Sigmoid colon (tissue), 7 donors: ENCODE measurements at regions of chr12 and their contacts with region 1.

Region 1: DNA sequence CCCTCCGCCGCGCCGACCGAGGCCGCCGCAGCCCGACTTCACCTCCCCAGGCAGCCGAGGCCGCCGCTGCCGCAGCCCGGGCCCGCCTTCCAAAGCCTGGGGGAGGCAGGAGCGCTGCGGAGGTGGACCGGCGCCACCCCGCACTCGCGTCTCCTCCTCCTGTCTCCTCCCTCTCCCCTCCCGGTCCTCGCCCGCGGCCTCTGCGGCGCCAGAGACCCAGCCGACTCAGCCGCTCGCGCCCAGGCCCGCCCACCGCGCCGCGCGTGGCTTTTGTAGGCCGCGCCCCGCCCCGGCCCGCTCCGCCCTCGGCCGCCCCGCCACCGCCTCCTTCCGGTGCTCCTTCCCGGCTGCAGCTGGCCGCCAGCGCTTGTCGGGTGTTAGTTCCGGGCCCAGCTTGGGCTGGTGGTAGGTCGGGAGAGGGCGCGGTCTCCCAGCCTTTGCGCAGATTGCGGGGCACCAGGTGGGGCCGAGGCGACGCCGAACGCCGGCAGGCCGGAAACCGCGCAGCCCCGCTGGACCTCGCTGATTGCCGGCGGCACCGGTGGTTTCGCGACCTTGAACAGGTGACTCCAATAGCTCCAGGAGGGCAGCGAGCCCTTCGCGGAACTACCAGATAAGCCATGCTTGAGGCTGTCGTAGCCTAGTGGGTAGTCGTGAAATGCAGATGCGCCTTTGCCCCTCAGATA is at the start of gene CAPRIN2:
- DNase-seq: peak; percentile 97
- H3K4me3 ChIP-seq: peak within 1 kb of the TSS; percentile 62 to 95 (median 76)
- H3K27ac ChIP-seq: peak within 1 kb of the TSS; percentile 88
- H3K4me1 ChIP-seq: peaks cover 0 to 19% (median 15%) of the 10 kb centered on the region in 4 donors
- H3K27me3 ChIP-seq: no peaks in the 10 kb centered on the region
- CTCF ChIP-seq: peak in 1 of 4 experiments; percentile 25
- EP300 ChIP-seq: no peak
- POLR2A ChIP-seq: peak in 1 of 2 donors; percentile 53
- total RNA-seq, gene CAPRIN2: 25.0 to 42.9 (median 31.5) TPM

Region 2: DNA sequence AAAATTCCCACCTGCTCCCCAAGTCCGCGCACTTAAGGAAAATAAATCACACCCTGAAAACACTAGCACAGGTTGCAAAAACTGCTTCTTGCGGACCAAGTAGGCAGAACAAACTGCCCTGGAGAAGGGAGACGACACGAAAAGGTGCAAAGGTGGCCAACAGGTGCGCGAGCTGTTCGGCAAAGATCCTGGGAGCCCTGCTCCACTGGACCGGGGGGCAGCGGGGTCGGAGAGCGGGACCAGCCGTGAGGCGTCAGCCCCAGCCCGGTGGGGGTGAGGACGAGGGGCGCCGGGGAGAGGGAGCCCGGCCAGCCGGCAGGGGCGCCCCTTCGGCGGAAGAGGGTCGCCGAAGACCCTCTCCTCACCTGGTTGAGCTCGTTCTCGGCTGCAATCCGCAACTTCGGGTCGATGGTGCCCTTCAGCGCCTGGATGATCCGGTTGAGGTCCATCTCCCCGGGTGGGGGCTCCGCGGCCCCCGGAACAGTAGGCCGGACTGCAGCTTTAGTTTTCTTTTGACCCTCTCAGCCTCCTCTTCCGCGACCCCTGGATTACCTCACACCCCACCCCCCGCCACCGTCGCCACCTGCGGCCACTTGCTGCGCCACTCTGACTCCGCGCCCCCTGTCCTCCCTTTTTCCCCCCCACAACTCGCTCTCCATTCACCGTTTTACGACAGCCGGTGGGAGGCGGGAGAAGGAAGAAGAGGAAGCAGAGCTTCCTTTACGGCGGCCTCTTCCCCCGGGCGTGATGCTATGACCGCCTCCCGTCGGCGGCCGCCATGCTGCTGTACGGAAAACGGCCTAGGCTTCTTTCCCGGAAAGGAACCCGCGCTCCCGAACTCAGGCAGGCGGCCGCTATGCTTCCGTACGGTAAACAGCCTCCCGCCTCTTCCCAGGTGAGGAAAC is 59.4 kb before region 1 on chr12 and contains the start of gene IPO8:
- intact Hi-C with region 1: loop called (anchors 2 kb)
- DNase-seq: peak; percentile 95
- H3K4me3 ChIP-seq: peak within 1 kb of the TSS; percentile 94 to 99 (median 97)
- H3K27ac ChIP-seq: peak within 1 kb of the TSS; percentile 86 to 90 (median 88)
- H3K4me1 ChIP-seq: peaks cover 0 to 42% (median 40%) of the 10 kb centered on the region in 4 donors
- H3K27me3 ChIP-seq: no peaks in the 10 kb centered on the region
- CTCF ChIP-seq: peak in 2 of 4 experiments; percentile 15 to 48
- EP300 ChIP-seq: no peak
- POLR2A ChIP-seq: no peak
- total RNA-seq, gene IPO8: 32.8 to 61.2 (median 37.4) TPM

Region 3: GRCh38 chr12:30795410-30796312 is 40.8 kb after region 1 on chr12:
- intact Hi-C with region 1: loop called (anchors 5 kb)
- DNase-seq: peak; percentile 73
- H3K4me3 ChIP-seq: peak overlapping the region; percentile 42 to 60 (median 50)
- H3K27ac ChIP-seq: peak overlapping the region in 2 of 4 donors; percentile 2 to 38
- H3K4me1 ChIP-seq: peaks cover 0 to 19% (median 17%) of the 10 kb centered on the region in 4 donors
- H3K27me3 ChIP-seq: peaks cover 0 to 32% (median 5%) of the 10 kb centered on the region in 3 donors
- CTCF ChIP-seq: no peak
- EP300 ChIP-seq: no peak
- POLR2A ChIP-seq: no peak

Region 4: DNA sequence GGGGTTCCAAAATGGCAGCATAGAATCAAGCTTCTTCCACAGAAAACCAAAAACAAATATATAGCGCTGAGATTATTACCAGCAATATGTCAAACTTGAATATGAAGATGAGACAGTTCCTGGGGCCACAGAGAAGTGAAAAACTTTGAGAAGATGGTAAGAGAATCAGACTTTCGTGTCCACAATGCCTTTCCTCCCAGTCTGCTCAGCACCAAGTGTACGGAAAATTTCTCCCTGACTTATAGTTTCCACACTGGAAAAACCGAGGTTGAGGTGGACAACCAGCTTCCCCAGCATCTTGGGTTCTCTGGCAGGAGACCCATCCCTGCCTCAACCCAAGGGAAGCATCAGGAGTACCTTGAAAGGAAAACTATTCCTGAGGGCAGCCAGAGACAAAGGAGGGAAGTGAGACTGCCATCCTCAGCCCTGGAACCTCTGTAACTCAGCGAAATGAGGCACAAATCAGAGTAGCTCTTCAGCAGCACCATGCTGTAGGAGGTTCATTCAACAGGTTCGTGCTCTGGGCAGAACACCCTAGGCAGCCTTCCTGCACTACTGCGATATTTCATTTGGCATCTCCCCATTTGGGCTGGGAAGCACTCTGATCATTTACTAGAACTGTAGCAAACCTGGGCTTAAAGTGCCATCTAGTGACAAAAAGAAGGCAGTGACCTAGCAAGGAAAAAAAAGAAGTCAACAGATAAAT is 52.3 kb after region 1 on chr12:
- intact Hi-C with region 1: loop called (anchors 2 kb)
- DNase-seq: no peak
- H3K4me3 ChIP-seq: no peak overlapping the region
- H3K27ac ChIP-seq: no peak overlapping the region
- H3K4me1 ChIP-seq: peaks cover 0 to 4% (median 2%) of the 10 kb centered on the region in 4 donors
- H3K27me3 ChIP-seq: peaks cover 0 to 4% (median 0%) of the 10 kb centered on the region in 3 donors
- CTCF ChIP-seq: peak; percentile 33 to 69 (median 60)
- EP300 ChIP-seq: no peak
- POLR2A ChIP-seq: no peak